Activated CD4-positive, alpha-beta T cell treated with anti-CD3 and anti-CD28 coated beads, Interleukin-2, amount 10 ng/mL, durations not matched to agents 24 days and 14 days (primary cell): ENCODE measurements at regions of chr2 and their contacts with region 1.

Region 1: GRCh38 chr2:189762551-189763298 is at the start of gene OSGEPL1:
- DNase-seq: peak; percentile 97
- H3K4me3 Mint-ChIP-seq: peak within 1 kb of the TSS; percentile 97
- H3K27ac Mint-ChIP-seq: peak within 1 kb of the TSS; percentile 98
- H3K4me1 Mint-ChIP-seq: peaks cover 12% of the 10 kb centered on the region
- H3K27me3 Mint-ChIP-seq: no peaks in the 10 kb centered on the region
- total RNA-seq, gene OSGEPL1: 11.1 and 12.2 TPM in 2 replicates

Region 2: DNA sequence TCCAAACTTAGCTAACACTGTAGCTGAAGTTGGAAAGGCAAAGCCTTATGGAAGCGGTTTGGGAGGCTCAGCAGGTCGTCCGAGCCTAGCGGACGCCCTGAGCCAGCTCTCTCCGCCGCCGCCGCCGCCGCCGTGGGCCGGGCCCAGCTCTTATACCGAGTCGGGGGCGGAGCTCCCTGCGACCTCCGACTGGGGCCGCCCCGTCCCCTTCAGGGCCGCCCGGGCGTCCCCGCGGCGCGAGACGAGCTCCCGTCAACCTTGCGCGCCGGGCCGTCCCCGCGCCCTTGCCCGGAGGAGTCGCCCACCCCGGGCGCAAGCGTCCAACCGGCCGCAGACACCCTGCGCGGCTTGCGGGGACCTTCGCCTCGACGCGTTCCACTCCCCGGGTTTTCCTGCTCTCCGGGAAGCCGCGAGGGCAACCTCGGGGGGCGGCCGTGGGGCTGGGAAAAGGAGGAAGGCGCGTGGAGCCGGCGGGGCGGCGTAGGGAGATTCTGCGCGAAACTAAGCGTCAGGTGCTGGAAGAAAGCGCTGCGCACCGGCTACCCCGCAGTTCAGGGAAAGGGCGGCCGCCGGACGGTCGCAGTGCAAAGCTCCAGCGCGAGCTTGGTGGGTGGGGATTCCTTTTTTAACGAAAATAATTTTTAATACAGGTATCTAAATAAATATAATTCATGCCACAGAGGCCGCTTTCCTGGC is 181.9 kb before region 1 on chr2 and contains the start of gene SLC40A1:
- intact Hi-C with region 1: loop called (anchors 5 kb)
- DNase-seq: peak; percentile 91
- H3K4me3 Mint-ChIP-seq: peak within 1 kb of the TSS; percentile 84
- H3K27ac Mint-ChIP-seq: peak within 1 kb of the TSS; percentile 35
- H3K4me1 Mint-ChIP-seq: peaks cover 18% of the 10 kb centered on the region
- H3K27me3 Mint-ChIP-seq: peaks cover 34% of the 10 kb centered on the region
- total RNA-seq, gene SLC40A1: 0.78 and 1.4 TPM in 2 replicates